ENCODE measurements at regions of chr22 and their contacts with region 1.

Region 1: GRCh38 chr22:42868751-42869251 is 11.7 kb upstream of the ARFGAP3 start:
- DNase-seq: peak; percentile 89 to 94
- ATAC-seq: peak; percentile 72 to 75
- H3K4me3 ChIP-seq: no peak overlapping the region
- H3K27ac ChIP-seq: peak overlapping the region; percentile 79 to 83 (median 81)
- H3K4me1 ChIP-seq: peaks cover 28 to 30% of the 10 kb centered on the region in 2 donors
- H3K27me3 ChIP-seq: no peaks in the 10 kb centered on the region
- CTCF ChIP-seq: no peak
- POLR2A ChIP-seq: peak in 1 of 2 donors; percentile 24

Region 2: GRCh38 chr22:42933481-42934091 is 64.8 kb after region 1 on chr22:
- in situ Hi-C with region 1: no loop called
- intact Hi-C with region 1: no loop called
- DNase-seq: no peak
- ATAC-seq: peak; percentile 61 to 64
- H3K4me3 ChIP-seq: peak overlapping the region in 3 of 4 donors; percentile 11 to 37 (median 33)
- H3K27ac ChIP-seq: peak overlapping the region; percentile 80 to 95 (median 83)
- H3K4me1 ChIP-seq: peaks cover 81 to 90% of the 10 kb centered on the region in 2 donors
- H3K27me3 ChIP-seq: no peaks in the 10 kb centered on the region
- CTCF ChIP-seq: no peak
- POLR2A ChIP-seq: no peak

Region 3: DNA sequence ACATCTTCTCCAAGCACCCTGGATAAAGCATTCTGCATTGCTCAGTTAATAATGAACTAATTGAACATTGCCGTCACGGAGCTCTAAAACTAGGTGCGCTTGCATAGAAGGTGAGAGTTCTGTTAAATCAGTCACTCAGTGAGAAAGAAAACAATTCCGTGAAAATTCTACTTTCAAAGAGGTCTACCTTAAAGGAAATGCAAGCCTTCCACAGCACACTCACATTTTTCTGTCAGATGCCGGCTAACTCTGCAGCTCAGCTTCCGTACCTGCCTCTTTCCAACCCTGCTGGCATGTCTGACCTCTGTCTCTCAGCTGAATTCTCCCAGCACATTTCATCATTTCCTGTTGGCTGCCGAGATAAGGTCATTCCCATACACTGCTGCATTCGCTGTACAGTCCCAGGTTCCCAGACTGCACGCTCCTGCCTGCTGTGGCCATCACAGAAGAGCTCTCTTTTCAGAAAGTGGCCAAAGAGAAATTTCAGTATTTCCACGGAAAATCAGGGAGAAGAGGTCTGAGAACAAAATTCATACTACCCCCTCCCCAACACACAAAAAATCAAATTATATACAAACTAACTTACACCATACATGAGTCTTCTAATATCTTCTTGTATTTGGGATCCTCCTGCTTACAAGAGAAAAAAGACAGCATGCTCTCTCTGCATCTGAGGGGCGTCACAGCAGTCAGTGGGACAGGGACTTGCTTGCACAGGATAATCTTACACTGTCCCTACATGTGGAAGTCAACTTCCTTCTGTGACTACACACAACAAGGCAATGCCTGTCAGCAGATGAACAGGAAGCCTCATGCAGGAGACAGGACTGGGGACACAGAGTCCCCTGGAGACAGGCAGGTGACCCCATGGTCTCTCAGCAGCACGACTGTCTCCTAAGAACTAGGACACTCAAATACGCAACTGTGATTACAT is 91.0 kb after region 1 on chr22:
- in situ Hi-C with region 1: loop called in 2 of 4 experiments (anchors 5 to 25 kb)
- intact Hi-C with region 1: loop called (anchors 2 kb)
- DNase-seq: peak; percentile 50 to 72
- ATAC-seq: peak; percentile 93 to 98
- H3K4me3 ChIP-seq: peak overlapping the region; percentile 32 to 46 (median 38)
- H3K27ac ChIP-seq: peak overlapping the region; percentile 35 to 79 (median 56)
- H3K4me1 ChIP-seq: peaks cover 31 to 59% of the 10 kb centered on the region in 2 donors
- H3K27me3 ChIP-seq: no peaks in the 10 kb centered on the region
- CTCF ChIP-seq: no peak
- POLR2A ChIP-seq: no peak

Region 4: DNA sequence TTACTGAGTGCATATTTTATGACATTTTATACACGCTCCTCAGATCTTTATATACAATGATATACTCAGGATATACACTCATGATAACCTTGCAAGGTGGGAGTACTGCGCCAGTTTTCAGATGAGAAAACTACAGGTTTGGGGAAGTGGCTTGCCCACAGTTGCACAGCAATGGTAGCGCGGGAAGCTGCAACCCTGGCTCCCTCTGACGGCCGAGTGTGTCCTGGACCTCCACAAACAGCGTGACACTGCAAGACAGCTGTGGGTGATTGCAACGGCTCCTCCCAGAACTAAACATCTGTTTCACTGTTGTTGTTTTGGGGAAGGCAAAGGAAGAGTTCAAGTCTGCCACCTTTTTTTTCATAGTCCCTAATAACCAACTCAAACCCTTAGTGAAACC is 99.1 kb after region 1 on chr22:
- in situ Hi-C with region 1: loop called in 2 of 4 experiments (anchors 5 to 25 kb)
- intact Hi-C with region 1: loop called (anchors 2 kb)
- DNase-seq: peak; percentile 72 to 74
- ATAC-seq: peak; percentile 60 to 69
- H3K4me3 ChIP-seq: no peak overlapping the region
- H3K27ac ChIP-seq: peak overlapping the region; percentile 7 to 77 (median 50)
- H3K4me1 ChIP-seq: peaks cover 26 to 44% of the 10 kb centered on the region in 2 donors
- H3K27me3 ChIP-seq: no peaks in the 10 kb centered on the region
- CTCF ChIP-seq: peak in 4 of 5 experiments; percentile 28 to 52 (median 45)
- POLR2A ChIP-seq: no peak

Region 5: GRCh38 chr22:43036282-43036829 is 167.6 kb after region 1 on chr22:
- in situ Hi-C with region 1: loop called in 3 of 4 experiments (anchors 5 to 25 kb)
- intact Hi-C with region 1: loop called (anchors 2 kb)
- DNase-seq: peak in 1 of 2 donors; percentile 28
- ATAC-seq: peak; percentile 64 to 74
- H3K4me3 ChIP-seq: no peak overlapping the region
- H3K27ac ChIP-seq: peak overlapping the region in 3 of 4 donors; percentile 7 to 51 (median 51)
- H3K4me1 ChIP-seq: no peaks in the 10 kb centered on the region
- H3K27me3 ChIP-seq: no peaks in the 10 kb centered on the region
- CTCF ChIP-seq: no peak
- POLR2A ChIP-seq: no peak